ENCODE measurements at regions of chr3 and their contacts with region 1.

Region 1: DNA sequence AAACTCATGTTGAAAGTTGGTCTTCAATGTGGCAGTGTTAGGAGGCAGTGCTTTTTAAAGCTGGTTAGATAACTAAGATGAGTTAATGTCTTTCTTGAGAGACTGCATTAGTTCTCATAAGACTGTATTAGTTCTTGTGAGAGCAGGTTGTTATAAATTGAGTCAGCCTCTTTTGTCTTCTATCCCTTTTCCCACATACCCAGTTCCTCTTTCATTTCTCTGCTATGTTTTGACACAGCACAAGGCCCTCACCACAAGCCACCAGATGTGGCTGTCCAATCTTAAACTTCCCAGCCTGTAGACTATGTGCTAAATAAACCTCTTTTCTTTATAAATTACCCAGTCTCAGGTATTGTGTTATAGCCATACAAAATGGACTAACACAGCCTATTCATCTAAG is 94.6 kb upstream of the SNTN start:
- DNase-seq: no peak
- ATAC-seq: no peak
- H3K4me3 ChIP-seq: no peak overlapping the region
- H3K27ac ChIP-seq: no peak overlapping the region
- H3K4me1 ChIP-seq: no peaks in the 10 kb centered on the region
- H3K27me3 ChIP-seq: no peaks in the 10 kb centered on the region
- CTCF ChIP-seq: no peak
- POLR2A ChIP-seq: no peak
- RAD21 ChIP-seq: no peak

Region 2: DNA sequence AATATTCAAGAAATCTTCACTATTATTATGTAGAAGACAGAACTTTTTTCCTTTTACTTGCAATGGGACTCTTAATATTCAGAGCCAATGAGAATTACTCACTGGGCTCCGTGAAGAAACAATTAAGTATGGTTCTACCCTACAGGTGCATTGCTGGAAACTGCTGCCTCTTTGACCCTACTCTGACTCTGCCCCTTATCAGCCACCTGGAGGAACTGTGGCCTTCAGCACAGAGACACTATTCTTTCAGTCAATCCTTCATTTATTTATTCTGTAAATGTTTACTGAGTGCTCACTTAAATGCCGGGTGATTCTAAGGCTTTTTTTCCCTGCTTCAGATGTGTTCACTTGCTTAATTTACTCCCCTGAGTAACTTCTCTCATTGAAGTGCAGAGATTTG is 116.7 kb before region 1 on chr3:
- CTCF ChIA-PET with region 1: no interaction called
- POLR2A ChIA-PET with region 1: no interaction called
- dilution Hi-C with region 1: no loop called
- in situ Hi-C with region 1: no loop called
- intact Hi-C with region 1: no loop called
- DNase-seq: no peak
- ATAC-seq: no peak
- H3K4me3 ChIP-seq: no peak overlapping the region
- H3K27ac ChIP-seq: no peak overlapping the region
- H3K4me1 ChIP-seq: no peaks in the 10 kb centered on the region
- H3K27me3 ChIP-seq: no peaks in the 10 kb centered on the region
- CTCF ChIP-seq: no peak
- POLR2A ChIP-seq: no peak
- RAD21 ChIP-seq: no peak

Region 3: DNA sequence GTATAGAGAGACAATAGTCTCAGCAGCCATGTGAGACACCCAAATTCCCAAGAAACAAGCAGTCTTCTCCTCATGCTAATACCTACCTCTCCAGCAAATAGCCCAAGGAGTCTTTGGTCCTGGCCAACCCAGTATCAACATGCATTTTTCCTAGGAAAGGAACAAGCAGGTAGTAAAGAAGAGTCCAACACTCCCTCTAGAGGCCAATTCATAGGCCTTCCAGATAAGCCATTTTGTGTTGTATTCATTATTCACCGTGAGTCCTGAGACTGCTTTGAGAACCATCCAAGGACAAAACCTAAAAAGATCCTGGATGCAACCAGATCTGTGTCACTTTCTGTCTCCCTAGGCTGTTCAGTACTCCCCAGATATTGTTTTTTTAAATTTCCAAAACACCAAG is 31.0 kb after region 1 on chr3:
- CTCF ChIA-PET with region 1: no interaction called
- POLR2A ChIA-PET with region 1: no interaction called
- dilution Hi-C with region 1: no loop called
- in situ Hi-C with region 1: no loop called
- intact Hi-C with region 1: no loop called
- DNase-seq: no peak
- ATAC-seq: no peak
- H3K4me3 ChIP-seq: no peak overlapping the region
- H3K27ac ChIP-seq: no peak overlapping the region
- H3K4me1 ChIP-seq: no peaks in the 10 kb centered on the region
- H3K27me3 ChIP-seq: no peaks in the 10 kb centered on the region
- CTCF ChIP-seq: no peak
- POLR2A ChIP-seq: no peak
- RAD21 ChIP-seq: no peak

Region 4: GRCh38 chr3:63661248-63661647 is 103.3 kb after region 1 on chr3:
- CTCF ChIA-PET with region 1: no interaction called
- POLR2A ChIA-PET with region 1: no interaction called
- dilution Hi-C with region 1: no loop called
- in situ Hi-C with region 1: no loop called
- intact Hi-C with region 1: no loop called
- DNase-seq: no peak
- ATAC-seq: peak; percentile 40; the same call in 1 of the 2 replicates
- H3K4me3 ChIP-seq: no peak overlapping the region
- H3K27ac ChIP-seq: no peak overlapping the region
- H3K4me1 ChIP-seq: no peaks in the 10 kb centered on the region
- H3K27me3 ChIP-seq: no peaks in the 10 kb centered on the region; the same call in 1 of the 2 replicates
- CTCF ChIP-seq: peak; percentile 36
- POLR2A ChIP-seq: no peak
- RAD21 ChIP-seq: peak; percentile 28; the same call in 1 of the 2 replicates

Region 5: DNA sequence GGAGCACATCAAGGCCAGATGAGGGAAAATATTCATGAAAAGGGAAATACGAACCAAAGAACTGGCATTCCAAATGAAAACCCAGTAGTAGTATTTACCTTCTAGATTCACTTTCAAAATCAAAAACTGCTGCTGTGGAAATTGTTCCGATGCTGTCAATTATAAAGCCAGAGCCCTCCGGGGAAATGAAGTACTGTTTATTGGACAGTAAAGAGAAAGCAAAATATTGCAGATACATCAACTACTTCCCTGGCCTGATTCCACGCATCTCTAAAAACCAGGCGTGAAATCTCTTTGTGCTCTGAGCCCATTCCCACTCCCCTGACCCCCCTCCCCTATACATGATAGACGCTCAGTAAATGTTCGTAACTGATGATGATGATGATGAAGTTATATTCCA is 228.0 kb after region 1 on chr3:
- CTCF ChIA-PET with region 1: no interaction called
- POLR2A ChIA-PET with region 1: no interaction called
- dilution Hi-C with region 1: no loop called
- in situ Hi-C with region 1: no loop called
- intact Hi-C with region 1: loop called (anchors 10 kb)
- DNase-seq: no peak
- ATAC-seq: no peak
- H3K4me3 ChIP-seq: no peak overlapping the region
- H3K27ac ChIP-seq: no peak overlapping the region
- H3K4me1 ChIP-seq: no peaks in the 10 kb centered on the region
- H3K27me3 ChIP-seq: peaks cover 3% of the 10 kb centered on the region; the same call in 1 of the 2 replicates
- CTCF ChIP-seq: no peak
- POLR2A ChIP-seq: no peak
- RAD21 ChIP-seq: no peak